Body of pancreas (tissue), 4 donors: ENCODE measurements at regions of chr20 and their contacts with region 1.

Region 1: GRCh38 chr20:7866285-7866684 is 74.0 kb downstream of the HAO1 start:
- DNase-seq: peak in 3 of 4 donors; percentile 6 to 40 (median 19)
- ATAC-seq: no peak
- H3K4me3 ChIP-seq: no peak overlapping the region
- H3K27ac ChIP-seq: no peak overlapping the region
- H3K4me1 ChIP-seq: no peaks in the 10 kb centered on the region
- H3K27me3 ChIP-seq: no peaks in the 10 kb centered on the region
- CTCF ChIP-seq: no peak
- POLR2A ChIP-seq: no peak

Region 2: GRCh38 chr20:6828794-6829423 is 1037.4 kb before region 1 on chr20:
- intact Hi-C with region 1: loop called (anchors 10 kb)
- DNase-seq: peak; percentile 72 to 84 (median 78)
- ATAC-seq: peak; percentile 85
- H3K4me3 ChIP-seq: no peak overlapping the region
- H3K27ac ChIP-seq: no peak overlapping the region
- H3K4me1 ChIP-seq: peaks cover 3% of the 10 kb centered on the region
- H3K27me3 ChIP-seq: no peaks in the 10 kb centered on the region
- CTCF ChIP-seq: peak; percentile 55 to 81 (median 69)
- POLR2A ChIP-seq: no peak

Region 3: DNA sequence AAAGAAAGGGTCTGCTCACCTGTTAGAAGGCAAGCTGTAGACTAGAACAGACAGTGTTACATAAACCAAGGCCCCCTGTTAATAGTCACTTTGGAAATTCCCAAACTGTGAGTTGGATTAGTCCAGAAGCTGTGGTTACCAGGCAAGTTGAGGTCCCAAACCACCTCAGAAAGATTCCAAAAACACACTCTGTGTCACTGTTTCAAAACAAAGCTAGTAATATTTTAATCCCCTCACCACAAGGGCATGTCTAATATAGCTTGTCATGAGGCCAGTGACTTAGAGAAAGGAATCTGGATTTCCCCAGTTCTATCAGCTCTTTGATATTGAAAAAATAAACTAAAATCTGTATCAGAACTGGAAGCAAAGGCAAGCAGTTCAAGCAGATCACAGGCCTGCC is 170.7 kb before region 1 on chr20:
- intact Hi-C with region 1: no loop called
- DNase-seq: no peak
- ATAC-seq: no peak
- H3K4me3 ChIP-seq: no peak overlapping the region
- H3K27ac ChIP-seq: no peak overlapping the region
- H3K4me1 ChIP-seq: no peaks in the 10 kb centered on the region
- H3K27me3 ChIP-seq: no peaks in the 10 kb centered on the region
- CTCF ChIP-seq: no peak
- POLR2A ChIP-seq: no peak

Region 4: GRCh38 chr20:7790189-7790588 is 76.1 kb before region 1 on chr20:
- intact Hi-C with region 1: no loop called
- DNase-seq: no peak
- ATAC-seq: no peak
- H3K4me3 ChIP-seq: no peak overlapping the region
- H3K27ac ChIP-seq: no peak overlapping the region
- H3K4me1 ChIP-seq: no peaks in the 10 kb centered on the region
- H3K27me3 ChIP-seq: no peaks in the 10 kb centered on the region
- CTCF ChIP-seq: no peak
- POLR2A ChIP-seq: no peak